PC-3 (cell line): ENCODE measurements at regions of chr4 and their contacts with region 1.

Region 1: DNA sequence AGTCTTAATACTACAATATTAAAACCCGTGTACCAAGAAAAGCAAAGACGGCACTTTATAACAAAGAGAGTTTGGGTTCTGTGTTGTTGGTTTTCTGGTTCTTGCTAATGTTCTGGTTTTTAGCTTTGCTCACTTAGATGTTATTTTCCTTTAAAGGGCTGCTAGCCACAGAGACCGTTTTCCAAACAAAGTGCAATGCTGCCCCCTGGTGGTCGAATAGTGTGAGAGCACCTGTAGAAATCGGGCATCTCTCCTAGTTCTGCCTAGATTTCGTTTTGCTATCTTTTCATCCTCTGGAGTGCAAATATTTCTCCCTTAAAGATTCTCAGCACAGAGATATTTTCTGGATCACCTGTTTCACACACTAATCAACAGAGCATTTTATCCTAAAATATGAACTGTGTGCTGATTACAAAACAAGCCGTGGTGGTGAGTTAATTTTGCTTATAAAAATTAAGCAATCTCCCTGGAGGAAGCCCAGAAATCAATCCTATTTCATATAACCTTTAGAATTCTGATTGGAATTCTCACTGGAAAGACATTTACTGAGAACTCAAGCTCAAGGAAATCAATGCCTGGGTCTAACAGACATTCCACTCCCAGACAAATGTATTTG is 334.5 kb upstream of the NOCT start:
- DNase-seq: peak; percentile 80
- ATAC-seq: peak; percentile 59
- H3K4me3 ChIP-seq: peak overlapping the region; percentile 34; the same call in 1 of the 2 replicates
- H3K27ac ChIP-seq: peak overlapping the region; percentile 90
- H3K4me1 ChIP-seq: peaks cover 9% of the 10 kb centered on the region
- H3K27me3 ChIP-seq: no peaks in the 10 kb centered on the region
- CTCF ChIP-seq: peak; percentile 86

Region 2: GRCh38 chr4:137283737-137284136 is 1397.4 kb before region 1 on chr4:
- CTCF ChIA-PET with region 1: no interaction called
- POLR2A ChIA-PET with region 1: no interaction called
- intact Hi-C with region 1: loop called (anchors 2 kb)
- DNase-seq: peak; percentile 49
- ATAC-seq: peak; percentile 54; the same call in 1 of the 2 replicates
- H3K4me3 ChIP-seq: no peak overlapping the region
- H3K27ac ChIP-seq: no peak overlapping the region
- H3K4me1 ChIP-seq: no peaks in the 10 kb centered on the region
- H3K27me3 ChIP-seq: no peaks in the 10 kb centered on the region
- CTCF ChIP-seq: peak; percentile 50

Region 3: DNA sequence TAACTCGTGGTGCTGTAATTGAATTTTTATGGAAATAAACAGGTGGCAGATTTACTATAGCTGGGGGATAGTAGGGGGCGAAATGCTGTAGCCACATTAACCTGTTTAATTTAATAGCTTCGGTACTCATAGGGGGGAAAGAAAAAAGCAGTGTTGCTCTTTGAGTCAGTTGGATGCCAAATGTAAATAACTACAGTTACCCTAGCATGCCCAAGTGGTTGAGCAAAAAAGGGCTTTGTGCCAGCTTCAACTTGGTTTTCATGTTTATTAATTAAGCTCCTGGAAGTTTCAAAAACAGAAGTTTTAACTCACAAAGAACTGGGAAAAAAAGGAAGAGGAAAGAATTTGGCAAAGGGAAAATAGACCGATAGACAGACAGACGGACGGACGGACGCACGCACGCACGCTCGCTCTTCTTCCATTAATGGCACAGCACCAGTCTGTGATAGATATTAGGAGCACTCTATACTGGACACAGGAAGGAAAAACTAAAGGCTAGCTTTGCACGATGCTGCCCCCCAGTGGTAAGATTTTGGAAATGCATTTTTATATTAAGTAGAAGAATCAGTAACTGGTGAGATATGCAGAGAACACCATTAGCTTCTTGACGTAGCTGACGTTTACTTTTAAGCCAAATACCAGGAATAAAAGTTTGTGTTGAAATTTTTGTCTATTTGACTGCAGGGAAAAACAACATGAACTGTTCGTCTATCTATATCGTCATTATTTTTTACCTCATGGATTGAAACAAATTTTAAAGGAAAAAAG is 590.8 kb before region 1 on chr4:
- CTCF ChIA-PET with region 1: no interaction called
- POLR2A ChIA-PET with region 1: no interaction called
- intact Hi-C with region 1: loop called (anchors 2 kb)
- DNase-seq: peak; percentile 85
- ATAC-seq: peak; percentile 88
- H3K4me3 ChIP-seq: peak overlapping the region; percentile 66
- H3K27ac ChIP-seq: no peak overlapping the region
- H3K4me1 ChIP-seq: peaks cover 4% of the 10 kb centered on the region; the same call in 1 of the 2 replicates
- H3K27me3 ChIP-seq: no peaks in the 10 kb centered on the region
- CTCF ChIP-seq: peak; percentile 74

Region 4: DNA sequence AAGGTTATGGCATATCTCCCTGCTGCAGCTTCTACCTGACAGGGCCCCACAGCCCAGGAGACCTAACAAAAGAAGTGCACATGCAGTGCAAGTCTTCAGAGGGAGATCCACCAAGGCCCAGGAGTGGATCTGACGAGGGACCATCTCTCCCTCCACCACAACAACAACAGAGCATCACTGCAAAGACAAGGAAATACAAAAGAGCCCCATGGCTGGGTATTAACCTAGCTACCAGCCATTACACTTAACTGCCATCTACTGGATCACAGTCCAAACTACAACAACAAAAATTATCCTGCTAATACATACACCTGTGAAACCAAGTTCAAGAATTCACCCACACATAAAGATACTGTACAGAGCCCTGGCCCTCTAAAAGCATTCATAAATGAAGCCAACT is 158.7 kb before region 1 on chr4:
- CTCF ChIA-PET with region 1: no interaction called
- POLR2A ChIA-PET with region 1: no interaction called
- intact Hi-C with region 1: loop called (anchors 5 kb)
- DNase-seq: peak; percentile 61
- ATAC-seq: peak; percentile 79
- H3K4me3 ChIP-seq: no peak overlapping the region
- H3K27ac ChIP-seq: no peak overlapping the region
- H3K4me1 ChIP-seq: no peaks in the 10 kb centered on the region
- H3K27me3 ChIP-seq: no peaks in the 10 kb centered on the region
- CTCF ChIP-seq: peak; percentile 65

Region 5: GRCh38 chr4:138919094-138919936 is 238.2 kb after region 1 on chr4:
- CTCF ChIA-PET with region 1: no interaction called
- POLR2A ChIA-PET with region 1: no interaction called
- intact Hi-C with region 1: loop called (anchors 1 kb)
- DNase-seq: peak; percentile 84
- ATAC-seq: peak; percentile 98
- H3K4me3 ChIP-seq: peak overlapping the region; percentile 59
- H3K27ac ChIP-seq: no peak overlapping the region
- H3K4me1 ChIP-seq: no peaks in the 10 kb centered on the region
- H3K27me3 ChIP-seq: no peaks in the 10 kb centered on the region
- CTCF ChIP-seq: peak; percentile 80